PC-9 (cell line): ENCODE measurements at regions of chr7 and their contacts with region 1.

Region 1: DNA sequence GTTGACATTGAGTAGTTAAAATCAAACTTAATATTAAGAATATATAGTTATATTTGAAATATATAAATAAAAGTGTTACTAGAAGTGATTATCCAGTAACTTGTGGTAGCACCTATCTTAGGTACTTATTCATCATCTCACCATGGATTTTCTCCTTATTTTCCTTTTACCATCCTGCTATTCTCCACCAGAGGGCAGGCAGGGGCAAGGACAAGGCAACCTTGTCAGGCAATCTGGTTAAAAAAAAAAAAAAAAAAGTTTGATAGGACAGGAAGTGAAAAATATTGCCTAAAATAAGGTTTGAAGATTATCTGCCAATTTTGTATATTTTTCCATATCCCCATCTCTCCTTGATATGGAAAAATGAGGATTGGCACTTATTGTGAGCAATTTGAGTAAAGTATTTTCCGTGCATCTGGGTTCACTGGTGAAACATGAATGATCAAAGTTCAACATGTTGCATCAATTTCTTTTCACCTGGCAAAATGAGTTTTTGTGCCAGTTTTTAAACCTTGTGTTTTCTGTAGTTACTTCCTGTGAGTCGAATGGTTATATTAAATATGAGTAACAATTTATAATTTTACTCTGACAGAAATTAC is 256.7 kb downstream of the AGMO start:
- DNase-seq: peak; percentile 46 to 50
- H3K4me3 ChIP-seq: no peak overlapping the region
- H3K27ac ChIP-seq: no peak overlapping the region
- H3K4me1 ChIP-seq: no peaks in the 10 kb centered on the region
- H3K27me3 ChIP-seq: no peaks in the 10 kb centered on the region
- CTCF ChIP-seq: peak; percentile 86

Region 2: GRCh38 chr7:14717816-14718215 is 587.3 kb before region 1 on chr7:
- CTCF ChIA-PET with region 1: no interaction called
- POLR2A ChIA-PET with region 1: no interaction called
- intact Hi-C with region 1: loop called (anchors 5 kb)
- DNase-seq: no peak
- H3K4me3 ChIP-seq: no peak overlapping the region
- H3K27ac ChIP-seq: no peak overlapping the region
- H3K4me1 ChIP-seq: no peaks in the 10 kb centered on the region
- H3K27me3 ChIP-seq: no peaks in the 10 kb centered on the region
- CTCF ChIP-seq: peak; percentile 77

Region 3: GRCh38 chr7:15863951-15864625 is 559.0 kb after region 1 on chr7:
- CTCF ChIA-PET with region 1: no interaction called
- POLR2A ChIA-PET with region 1: no interaction called
- intact Hi-C with region 1: no loop called
- DNase-seq: no peak
- H3K4me3 ChIP-seq: no peak overlapping the region
- H3K27ac ChIP-seq: no peak overlapping the region
- H3K4me1 ChIP-seq: no peaks in the 10 kb centered on the region
- H3K27me3 ChIP-seq: no peaks in the 10 kb centered on the region
- CTCF ChIP-seq: no peak

Region 4: GRCh38 chr7:16028103-16028502 is 723.0 kb after region 1 on chr7:
- CTCF ChIA-PET with region 1: no interaction called
- POLR2A ChIA-PET with region 1: interaction called, 21 read pairs
- intact Hi-C with region 1: no loop called
- DNase-seq: no peak
- H3K4me3 ChIP-seq: no peak overlapping the region
- H3K27ac ChIP-seq: no peak overlapping the region
- H3K4me1 ChIP-seq: no peaks in the 10 kb centered on the region
- H3K27me3 ChIP-seq: no peaks in the 10 kb centered on the region
- CTCF ChIP-seq: no peak

Region 5: DNA sequence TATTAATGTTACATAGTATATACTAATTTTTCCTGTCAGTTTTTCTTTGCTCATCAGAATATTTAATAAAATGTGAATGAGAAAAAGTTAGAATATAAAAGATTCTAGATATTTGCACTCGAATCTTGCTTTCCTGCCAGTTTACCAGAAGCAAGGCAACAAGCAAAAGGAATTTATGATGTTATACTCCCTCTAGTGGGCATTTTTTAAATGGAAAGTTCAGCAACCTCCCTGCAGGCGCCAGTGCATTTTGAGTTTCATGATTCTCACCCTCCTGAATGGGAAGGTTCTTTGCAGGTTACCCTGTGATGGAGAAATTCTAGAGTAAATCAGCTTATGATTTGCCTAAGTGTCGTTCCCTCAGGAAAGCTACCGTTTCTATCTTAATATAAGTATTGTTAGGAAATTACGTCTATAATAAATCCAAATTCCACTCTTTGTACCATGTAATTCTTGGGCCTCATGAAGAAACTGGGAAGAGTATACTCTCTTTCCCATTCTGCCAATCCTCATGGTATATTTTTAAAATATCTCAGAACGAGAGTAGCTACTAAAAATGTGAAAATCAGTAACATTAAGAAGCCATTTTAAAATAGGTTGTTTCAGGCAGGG is 766.3 kb after region 1 on chr7:
- CTCF ChIA-PET with region 1: no interaction called
- POLR2A ChIA-PET with region 1: no interaction called
- intact Hi-C with region 1: loop called (anchors 1 kb)
- DNase-seq: peak; percentile 16 to 57
- H3K4me3 ChIP-seq: no peak overlapping the region
- H3K27ac ChIP-seq: no peak overlapping the region
- H3K4me1 ChIP-seq: no peaks in the 10 kb centered on the region
- H3K27me3 ChIP-seq: no peaks in the 10 kb centered on the region
- CTCF ChIP-seq: peak; percentile 95